Colonic mucosa (tissue), 4 donors: ENCODE measurements at regions of chr12 and their contacts with region 1.

Region 1: GRCh38 chr12:131949431-131950181 is at the start of gene EP400:
- DNase-seq: peak; percentile 96
- H3K4me3 ChIP-seq: peak within 1 kb of the TSS; percentile 100
- H3K27ac ChIP-seq: peak within 1 kb of the TSS; percentile 68
- H3K4me1 ChIP-seq: no peaks in the 10 kb centered on the region
- H3K27me3 ChIP-seq: no peaks in the 10 kb centered on the region
- CTCF ChIP-seq: peak; percentile 31
- total RNA-seq, gene EP400: 23.3 to 39.0 TPM

Region 2: GRCh38 chr12:131850856-131851559 is 98.6 kb before region 1 on chr12:
- intact Hi-C with region 1: loop called (anchors 10 kb)
- DNase-seq: no peak
- H3K4me3 ChIP-seq: no peak overlapping the region
- H3K27ac ChIP-seq: no peak overlapping the region
- H3K4me1 ChIP-seq: no peaks in the 10 kb centered on the region
- H3K27me3 ChIP-seq: peaks cover 5% of the 10 kb centered on the region
- CTCF ChIP-seq: peak; percentile 75

Region 3: GRCh38 chr12:131894313-131894860 is 55.2 kb before region 1 on chr12 and contains the start of gene ULK1:
- intact Hi-C with region 1: loop called (anchors 10 kb)
- DNase-seq: peak; percentile 92
- H3K4me3 ChIP-seq: peak within 1 kb of the TSS; percentile 59
- H3K27ac ChIP-seq: peak within 1 kb of the TSS; percentile 92
- H3K4me1 ChIP-seq: peaks cover 5% of the 10 kb centered on the region
- H3K27me3 ChIP-seq: no peaks in the 10 kb centered on the region
- CTCF ChIP-seq: no peak
- total RNA-seq, gene ULK1: 20.3 to 31.9 TPM